GM12878 (cell line): ENCODE measurements at regions of chr4 and their contacts with region 1.

Region 1: DNA sequence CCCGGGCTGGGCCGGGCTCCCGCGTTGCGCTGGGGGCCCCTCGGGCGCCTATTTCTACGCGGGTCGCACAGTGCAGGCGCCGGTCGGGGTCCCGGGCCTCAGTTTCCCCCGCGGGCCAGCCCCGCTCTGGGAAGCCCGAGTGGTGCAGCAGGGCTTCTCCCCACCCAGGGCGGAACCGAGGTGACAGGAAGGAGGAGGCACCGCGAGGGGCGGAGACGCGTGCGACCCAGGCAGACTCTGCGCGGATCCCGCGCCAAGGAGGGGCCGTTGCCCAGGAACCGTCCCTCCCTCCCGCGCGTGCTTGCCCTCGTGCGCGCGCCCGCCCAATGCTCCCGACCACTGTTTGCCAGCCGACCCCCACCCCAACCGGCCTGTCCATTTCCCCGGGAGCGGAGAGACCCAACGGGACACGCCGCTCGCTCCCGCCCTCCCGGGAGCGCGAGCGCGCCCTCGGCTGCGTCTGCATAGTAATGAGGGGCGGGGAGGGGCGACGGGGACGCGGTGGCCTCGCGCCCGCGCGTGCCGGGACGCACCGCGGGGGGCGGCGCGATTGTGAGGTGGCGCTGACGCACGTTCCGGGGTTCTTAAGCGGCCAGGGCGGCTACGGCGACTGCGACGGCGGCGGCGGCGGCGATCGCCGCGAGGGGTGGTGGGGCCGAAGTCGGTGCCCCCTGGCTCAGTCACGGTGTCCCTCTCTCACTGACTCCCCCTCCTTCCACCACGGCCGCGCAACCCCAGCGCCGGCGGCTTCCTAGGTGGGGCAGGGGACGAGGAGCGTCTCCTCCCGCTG is at the start of gene CPEB2:
- DNase-seq: peak; percentile 81
- ATAC-seq: peak; percentile 80
- H3K4me3 ChIP-seq: peak within 1 kb of the TSS; percentile 93
- H3K27ac ChIP-seq: peak within 1 kb of the TSS; percentile 96
- H3K4me1 ChIP-seq: no peaks in the 10 kb centered on the region
- H3K27me3 ChIP-seq: no peaks in the 10 kb centered on the region
- CTCF ChIP-seq: no peak
- EP300 ChIP-seq: 0 out of 4 replicates have a peak, but pooled peaks of 1 of the 2 experiments have one; percentile 3
- POLR2A ChIP-seq: peak; percentile 92
- RAD21 ChIP-seq: peak; percentile 8; the same call in 1 of the 2 replicates
- polyA plus RNA-seq, gene CPEB2: 0.84 to 1.4 TPM

Region 2: DNA sequence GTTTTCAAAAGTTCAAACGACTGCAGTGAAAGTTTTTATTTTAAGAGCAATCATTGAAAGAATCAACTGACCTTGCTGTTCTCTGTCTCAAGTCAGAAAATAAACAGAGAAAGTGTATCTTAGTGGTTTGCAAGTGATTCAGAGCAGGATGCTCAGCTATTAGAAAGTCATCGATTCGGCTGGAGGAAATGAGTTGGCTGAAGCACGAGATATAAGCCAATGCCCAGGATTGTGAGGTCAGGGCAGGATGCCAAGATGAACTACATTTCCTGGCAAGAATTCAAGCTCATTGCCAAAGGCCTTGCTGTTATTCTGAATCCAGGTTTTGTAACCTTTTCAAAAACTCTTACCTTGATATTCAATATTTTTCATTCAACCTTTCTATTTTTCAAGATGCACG is 833.1 kb before region 1 on chr4:
- CTCF ChIA-PET with region 1: no interaction called
- POLR2A ChIA-PET with region 1: no interaction called
- RAD21 ChIA-PET with region 1: no interaction called
- SMC1A ChIA-PET with region 1: no interaction called
- in situ Hi-C with region 1: loop called (anchors 25 kb)
- intact Hi-C with region 1: loop called (anchors 5 kb)
- DNase-seq: peak; percentile 53
- ATAC-seq: peak; percentile 67
- H3K4me3 ChIP-seq: no peak overlapping the region
- H3K27ac ChIP-seq: no peak overlapping the region
- H3K4me1 ChIP-seq: peaks cover 10% of the 10 kb centered on the region
- H3K27me3 ChIP-seq: no peaks in the 10 kb centered on the region
- CTCF ChIP-seq: no peak
- EP300 ChIP-seq: peak in 1 of 2 experiments; percentile 11; a peak in 1 of 4 replicates
- POLR2A ChIP-seq: no peak
- RAD21 ChIP-seq: no peak

Region 3: GRCh38 chr4:14856076-14856933 is 145.8 kb before region 1 on chr4:
- CTCF ChIA-PET with region 1: no interaction called
- POLR2A ChIA-PET with region 1: no interaction called
- RAD21 ChIA-PET with region 1: interaction called, 3 read pairs
- SMC1A ChIA-PET with region 1: interaction called, 3 read pairs
- in situ Hi-C with region 1: no loop called
- intact Hi-C with region 1: loop called (anchors 1 kb)
- DNase-seq: peak; percentile 96
- ATAC-seq: peak; percentile 96
- H3K4me3 ChIP-seq: no peak overlapping the region
- H3K27ac ChIP-seq: peak overlapping the region; percentile 51
- H3K4me1 ChIP-seq: peaks cover 20% of the 10 kb centered on the region
- H3K27me3 ChIP-seq: no peaks in the 10 kb centered on the region
- CTCF ChIP-seq: no peak
- EP300 ChIP-seq: peak; percentile 81 to 92; a peak in 3 of 4 replicates
- POLR2A ChIP-seq: no peak
- RAD21 ChIP-seq: peak; percentile 27; the same call in 1 of the 2 replicates

Region 4: GRCh38 chr4:15020502-15021286 is 18.6 kb after region 1 on chr4:
- CTCF ChIA-PET with region 1: interaction called, 6 read pairs
- POLR2A ChIA-PET with region 1: interaction called, 3 read pairs
- RAD21 ChIA-PET with region 1: interaction called, 3 read pairs
- SMC1A ChIA-PET with region 1: interaction called, 43 read pairs
- in situ Hi-C with region 1: no loop called
- intact Hi-C with region 1: no loop called
- DNase-seq: peak; percentile 25
- ATAC-seq: peak; percentile 87
- H3K4me3 ChIP-seq: no peak overlapping the region
- H3K27ac ChIP-seq: no peak overlapping the region
- H3K4me1 ChIP-seq: peaks cover 4% of the 10 kb centered on the region; the same call in 1 of the 2 replicates
- H3K27me3 ChIP-seq: no peaks in the 10 kb centered on the region
- CTCF ChIP-seq: no peak
- EP300 ChIP-seq: no peak
- POLR2A ChIP-seq: no peak
- RAD21 ChIP-seq: no peak

Region 5: GRCh38 chr4:15655229-15656037 is 653.4 kb after region 1 on chr4 and contains the start of gene FBXL5:
- CTCF ChIA-PET with region 1: no interaction called
- POLR2A ChIA-PET with region 1: no interaction called
- RAD21 ChIA-PET with region 1: no interaction called
- SMC1A ChIA-PET with region 1: no interaction called
- in situ Hi-C with region 1: loop called (anchors 10 kb)
- intact Hi-C with region 1: loop called (anchors 5 kb)
- DNase-seq: peak; percentile 36
- ATAC-seq: peak; percentile 64
- H3K4me3 ChIP-seq: peak within 1 kb of the TSS; percentile 84
- H3K27ac ChIP-seq: peak within 1 kb of the TSS; percentile 95
- H3K4me1 ChIP-seq: peaks cover 15% of the 10 kb centered on the region
- H3K27me3 ChIP-seq: no peaks in the 10 kb centered on the region
- CTCF ChIP-seq: no peak
- EP300 ChIP-seq: no peak
- POLR2A ChIP-seq: peak; percentile 88
- RAD21 ChIP-seq: no peak
- polyA plus RNA-seq, gene FBXL5: 10.1 to 12.3 TPM